PC-3 (cell line): ENCODE measurements at regions of chr1 and their contacts with region 1.

Region 1: DNA sequence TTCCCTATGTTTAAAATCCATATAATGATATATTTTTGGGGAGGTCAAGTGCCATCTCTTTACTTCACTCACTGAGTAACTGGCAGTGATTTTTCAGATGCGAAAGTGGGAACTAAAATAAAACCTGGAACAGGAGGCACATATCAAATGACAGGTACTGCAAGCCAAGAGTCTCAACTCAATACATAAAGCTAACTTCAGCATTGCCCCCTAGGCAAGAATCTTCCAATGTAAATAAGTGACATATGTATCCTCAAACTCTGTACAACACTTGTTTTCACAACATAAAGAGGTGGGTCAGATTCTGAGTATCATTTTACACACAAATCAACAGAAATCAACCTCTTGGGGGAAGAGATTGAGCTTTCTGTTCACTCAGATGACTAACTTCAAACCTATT is 18.1 kb downstream of the DCAF8 start:
- DNase-seq: peak; percentile 64
- ATAC-seq: peak; percentile 88
- H3K4me3 ChIP-seq: no peak overlapping the region
- H3K27ac ChIP-seq: no peak overlapping the region
- H3K4me1 ChIP-seq: peaks cover 19% of the 10 kb centered on the region
- H3K27me3 ChIP-seq: no peaks in the 10 kb centered on the region
- CTCF ChIP-seq: no peak

Region 2: DNA sequence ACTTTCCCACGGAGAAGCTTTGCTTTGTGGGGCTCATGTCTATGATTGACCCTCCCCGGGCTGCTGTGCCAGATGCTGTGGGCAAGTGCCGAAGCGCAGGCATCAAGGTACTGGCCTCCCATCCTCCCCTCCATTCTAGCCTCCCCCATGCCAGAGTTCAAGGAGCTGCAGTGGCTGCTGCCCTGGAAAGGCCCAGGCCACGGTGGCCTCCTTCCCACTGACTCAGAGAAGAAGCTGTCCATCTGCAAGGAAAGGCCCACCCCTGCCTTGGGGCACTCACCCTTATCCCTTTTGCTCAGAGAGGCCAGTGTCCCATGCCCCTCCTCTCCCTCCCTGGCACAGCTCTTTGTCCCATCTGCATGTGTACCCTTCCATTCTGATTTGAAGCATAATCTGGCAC is 113.7 kb before region 1 on chr1:
- CTCF ChIA-PET with region 1: interaction called, 13 read pairs
- POLR2A ChIA-PET with region 1: no interaction called
- intact Hi-C with region 1: no loop called
- DNase-seq: no peak
- ATAC-seq: no peak
- H3K4me3 ChIP-seq: no peak overlapping the region
- H3K27ac ChIP-seq: no peak overlapping the region
- H3K4me1 ChIP-seq: peaks cover 24% of the 10 kb centered on the region
- H3K27me3 ChIP-seq: no peaks in the 10 kb centered on the region
- CTCF ChIP-seq: no peak

Region 3: GRCh38 chr1:160291248-160292220 is 47.3 kb after region 1 on chr1:
- CTCF ChIA-PET with region 1: interaction called, 11 read pairs
- POLR2A ChIA-PET with region 1: no interaction called
- intact Hi-C with region 1: no loop called
- DNase-seq: peak; percentile 80
- ATAC-seq: peak; percentile 87
- H3K4me3 ChIP-seq: no peak overlapping the region
- H3K27ac ChIP-seq: no peak overlapping the region
- H3K4me1 ChIP-seq: peaks cover 4% of the 10 kb centered on the region; the same call in 1 of the 2 replicates
- H3K27me3 ChIP-seq: no peaks in the 10 kb centered on the region
- CTCF ChIP-seq: peak; percentile 92